Prostate gland (tissue), 2 donors: ENCODE measurements at regions of chr16 and their contacts with region 1.

Region 1: GRCh38 chr16:10743610-10744393 is at the start of gene NUBP1:
- DNase-seq: peak; percentile 99
- H3K4me3 ChIP-seq: peak within 1 kb of the TSS; percentile 42 to 54
- H3K27ac ChIP-seq: peak within 1 kb of the TSS; percentile 93
- H3K4me1 ChIP-seq: no peaks in the 10 kb centered on the region
- H3K27me3 ChIP-seq: no peaks in the 10 kb centered on the region
- CTCF ChIP-seq: peak in 2 of 4 experiments; percentile 8 to 33
- POLR2A ChIP-seq: peak; percentile 90
- total RNA-seq, gene NUBP1: 31.6 to 36.0 TPM

Region 2: GRCh38 chr16:10776280-10776679 is 32.5 kb after region 1 on chr16:
- intact Hi-C with region 1: no loop called
- DNase-seq: no peak
- H3K4me3 ChIP-seq: no peak overlapping the region
- H3K27ac ChIP-seq: no peak overlapping the region
- H3K4me1 ChIP-seq: no peaks in the 10 kb centered on the region
- H3K27me3 ChIP-seq: no peaks in the 10 kb centered on the region
- CTCF ChIP-seq: no peak
- POLR2A ChIP-seq: no peak

Region 3: DNA sequence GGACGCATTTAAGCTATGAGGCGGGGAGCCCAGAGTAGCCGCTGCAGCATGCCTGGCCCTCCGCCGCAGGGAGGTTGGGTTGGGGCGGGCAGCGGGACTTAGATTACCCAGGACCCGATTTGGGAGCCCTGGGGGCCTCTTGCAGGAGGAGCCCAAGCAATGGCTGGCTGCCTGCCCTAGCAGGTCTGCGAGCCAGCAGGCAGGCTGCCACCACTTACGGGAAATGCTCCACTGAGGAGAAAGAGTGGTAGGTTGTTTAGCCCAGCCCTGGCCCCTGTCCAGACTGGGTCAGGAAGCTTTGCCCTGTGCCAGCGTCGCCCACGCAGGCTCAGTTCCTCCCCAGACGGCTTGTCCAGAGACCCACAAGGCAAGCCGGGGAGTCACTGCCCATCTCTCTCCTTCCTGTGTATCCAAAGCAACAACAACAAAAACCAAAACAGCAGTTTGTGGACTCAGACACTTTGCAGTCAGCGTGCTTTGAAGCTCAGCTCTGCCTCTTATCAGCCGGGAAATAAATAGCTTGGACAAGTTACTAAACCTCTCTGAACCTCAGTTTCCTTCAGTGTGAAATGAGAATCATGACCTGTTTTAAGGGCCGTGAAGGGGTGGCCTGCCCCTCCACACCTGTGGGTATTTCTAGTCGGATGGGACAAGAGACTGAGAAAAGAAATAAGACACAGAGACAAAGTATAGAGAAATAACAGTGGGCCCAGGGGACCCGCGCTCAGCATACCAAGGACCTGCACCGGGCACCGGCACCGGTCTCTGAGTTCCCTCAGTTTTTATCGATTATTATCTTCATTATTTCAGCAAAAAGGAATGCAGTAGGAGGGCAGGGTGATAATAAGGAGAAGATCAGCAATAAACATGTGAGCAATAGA is 85.3 kb after region 1 on chr16:
- intact Hi-C with region 1: loop called (anchors 5 kb)
- DNase-seq: peak; percentile 87
- H3K4me3 ChIP-seq: no peak overlapping the region
- H3K27ac ChIP-seq: peak overlapping the region; percentile 82 to 85
- H3K4me1 ChIP-seq: peaks cover 17% of the 10 kb centered on the region
- H3K27me3 ChIP-seq: no peaks in the 10 kb centered on the region
- CTCF ChIP-seq: no peak
- POLR2A ChIP-seq: no peak

Region 4: DNA sequence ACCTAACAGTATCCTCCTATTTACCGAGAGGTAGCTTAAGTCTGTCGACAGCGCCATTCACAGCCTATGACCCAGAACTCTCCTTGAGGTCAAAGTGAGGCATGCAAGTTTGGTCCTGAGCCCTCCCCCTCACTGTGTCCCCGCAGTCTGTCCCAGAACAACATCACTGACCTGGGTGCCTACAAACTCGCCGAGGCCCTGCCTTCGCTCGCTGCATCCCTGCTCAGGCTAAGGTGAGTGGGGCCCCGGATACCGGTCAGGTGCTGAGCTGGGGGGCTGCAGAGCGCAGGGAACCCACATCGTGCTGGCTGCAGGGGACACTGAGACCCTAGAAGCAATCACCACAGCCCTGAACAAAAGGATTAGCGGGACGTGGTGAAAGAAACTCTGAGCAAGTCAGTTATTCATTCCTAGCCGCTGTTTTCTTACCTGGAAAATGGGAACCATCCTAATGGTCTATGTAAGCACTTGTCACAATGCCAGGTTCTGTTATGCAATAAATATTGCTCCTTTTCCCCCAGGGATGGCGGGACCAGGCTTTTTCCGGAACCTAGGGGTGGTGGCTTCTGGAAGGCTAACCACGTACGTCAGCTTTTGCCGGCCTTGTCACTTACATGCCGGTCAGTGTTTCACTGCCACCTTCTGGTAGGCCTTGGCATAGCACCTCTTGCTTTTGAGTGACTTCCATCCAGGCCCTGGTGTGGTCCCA is 174.6 kb after region 1 on chr16:
- intact Hi-C with region 1: loop called (anchors 5 kb)
- DNase-seq: peak; percentile 91
- H3K4me3 ChIP-seq: peak overlapping the region in 1 of 2 donors; percentile 9
- H3K27ac ChIP-seq: no peak overlapping the region
- H3K4me1 ChIP-seq: no peaks in the 10 kb centered on the region
- H3K27me3 ChIP-seq: no peaks in the 10 kb centered on the region
- CTCF ChIP-seq: peak; percentile 81 to 94 (median 87)
- POLR2A ChIP-seq: no peak

Region 5: GRCh38 chr16:11133344-11133943 is 389.6 kb after region 1 on chr16:
- intact Hi-C with region 1: loop called (anchors 10 kb)
- DNase-seq: peak; percentile 79
- H3K4me3 ChIP-seq: no peak overlapping the region
- H3K27ac ChIP-seq: peak overlapping the region in 1 of 2 donors; percentile 29
- H3K4me1 ChIP-seq: no peaks in the 10 kb centered on the region
- H3K27me3 ChIP-seq: no peaks in the 10 kb centered on the region
- CTCF ChIP-seq: no peak
- POLR2A ChIP-seq: no peak

Region 6: GRCh38 chr16:11915644-11916523 is 1172.1 kb after region 1 on chr16 and contains the start of gene GSPT1:
- intact Hi-C with region 1: loop called (anchors 10 kb)
- DNase-seq: peak; percentile 98
- H3K4me3 ChIP-seq: peak within 1 kb of the TSS; percentile 90 to 94
- H3K27ac ChIP-seq: peak within 1 kb of the TSS; percentile 90 to 97
- H3K4me1 ChIP-seq: peaks cover 2% of the 10 kb centered on the region
- H3K27me3 ChIP-seq: no peaks in the 10 kb centered on the region
- CTCF ChIP-seq: peak in 2 of 4 experiments; percentile 60 to 67
- POLR2A ChIP-seq: peak; percentile 93
- total RNA-seq, gene GSPT1: 70.2 to 88.7 TPM